Endothelial cell of umbilical vein (primary cell): ENCODE measurements at regions of chr16 and their contacts with region 1.

Region 1: DNA sequence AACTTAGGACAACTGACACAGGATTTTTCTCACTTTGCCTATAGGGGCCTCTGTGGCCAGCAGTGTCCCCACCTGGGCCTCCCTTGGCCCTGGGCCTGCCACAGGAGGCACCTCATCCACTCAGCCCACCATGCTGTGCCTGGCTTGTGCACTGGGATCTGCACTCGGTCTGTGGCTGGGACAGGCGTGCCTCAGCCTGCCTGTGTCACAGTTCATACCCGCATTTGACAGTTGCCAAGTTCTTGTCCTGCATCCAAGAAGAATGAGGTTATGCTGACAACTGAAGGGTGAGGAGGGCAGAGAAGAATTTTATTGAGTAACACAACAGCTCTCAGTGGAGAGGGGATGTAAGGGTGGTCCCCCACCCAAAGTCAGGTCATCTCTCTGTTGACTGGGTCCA is 36.0 kb downstream of the ZFP90 start:
- DNase-seq: no peak
- H3K4me3 ChIP-seq: no peak overlapping the region
- H3K27ac ChIP-seq: no peak overlapping the region
- H3K4me1 ChIP-seq: no peaks in the 10 kb centered on the region
- H3K27me3 ChIP-seq: no peaks in the 10 kb centered on the region
- CTCF ChIP-seq: no peak
- POLR2A ChIP-seq: no peak

Region 2: GRCh38 chr16:68287276-68288251 is 287.5 kb before region 1 on chr16:
- CTCF ChIA-PET with region 1: no interaction called
- POLR2A ChIA-PET with region 1: no interaction called
- dilution Hi-C with region 1: no loop called
- intact Hi-C with region 1: no loop called
- DNase-seq: peak; percentile 89
- H3K4me3 ChIP-seq: no peak overlapping the region
- H3K27ac ChIP-seq: peak overlapping the region; percentile 34
- H3K4me1 ChIP-seq: peaks cover 69% of the 10 kb centered on the region
- H3K27me3 ChIP-seq: no peaks in the 10 kb centered on the region
- CTCF ChIP-seq: no peak
- POLR2A ChIP-seq: peak; percentile 13

Region 3: DNA sequence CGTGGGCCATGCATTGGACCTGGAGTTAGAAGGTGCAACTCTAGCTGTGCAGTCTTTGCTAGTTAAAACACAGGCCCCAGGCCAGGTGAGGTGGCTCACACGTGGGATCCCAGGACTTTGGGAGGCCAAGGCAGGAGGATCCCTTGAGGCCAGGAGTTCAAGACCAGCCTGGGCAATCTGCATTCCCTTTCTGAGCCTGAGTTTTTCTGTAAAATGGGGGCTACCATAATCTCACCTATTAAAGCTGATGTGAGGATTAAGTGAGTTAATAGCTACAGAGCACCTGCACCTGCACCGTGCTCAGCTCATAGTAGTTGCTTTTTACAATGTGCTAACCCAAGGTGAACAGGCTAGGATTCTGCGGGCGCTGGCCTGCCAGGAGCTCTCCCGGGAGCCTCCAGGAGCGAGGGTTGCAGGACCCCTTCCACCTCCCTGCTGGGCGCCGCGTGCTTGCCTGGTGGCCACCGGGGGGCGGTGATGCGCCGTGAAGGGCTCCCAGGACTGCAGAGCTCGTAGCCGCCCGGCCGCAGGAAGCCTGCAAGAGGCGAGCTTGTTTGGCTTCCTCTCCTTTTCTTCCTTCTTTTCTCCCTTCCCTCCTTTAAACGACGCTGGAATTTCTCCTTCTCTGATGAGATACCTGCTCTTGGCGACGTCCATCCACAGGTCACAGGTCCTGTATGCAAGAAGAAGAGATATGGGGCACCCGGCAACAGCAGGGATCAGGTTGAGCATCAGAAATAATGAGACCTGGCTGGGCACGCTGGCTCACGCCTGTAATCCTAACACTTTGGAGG is 15.3 kb after region 1 on chr16:
- CTCF ChIA-PET with region 1: interaction called, 12 read pairs
- POLR2A ChIA-PET with region 1: no interaction called
- dilution Hi-C with region 1: no loop called
- intact Hi-C with region 1: no loop called
- DNase-seq: peak; percentile 38
- H3K4me3 ChIP-seq: no peak overlapping the region
- H3K27ac ChIP-seq: no peak overlapping the region
- H3K4me1 ChIP-seq: no peaks in the 10 kb centered on the region
- H3K27me3 ChIP-seq: no peaks in the 10 kb centered on the region
- CTCF ChIP-seq: peak; percentile 58 to 79
- POLR2A ChIP-seq: no peak